AG04450 (cell line): ENCODE measurements at regions of chr6 and their contacts with region 1.

Region 1: GRCh38 chr6:37018198-37019064 is 13.0 kb downstream of the FGD2 start:
- DNase-seq: peak; percentile 82
- H3K4me3 ChIP-seq: no peak overlapping the region
- H3K27ac ChIP-seq: no peak overlapping the region
- H3K27me3 ChIP-seq: no peaks in the 10 kb centered on the region
- CTCF ChIP-seq: peak; percentile 95

Region 2: DNA sequence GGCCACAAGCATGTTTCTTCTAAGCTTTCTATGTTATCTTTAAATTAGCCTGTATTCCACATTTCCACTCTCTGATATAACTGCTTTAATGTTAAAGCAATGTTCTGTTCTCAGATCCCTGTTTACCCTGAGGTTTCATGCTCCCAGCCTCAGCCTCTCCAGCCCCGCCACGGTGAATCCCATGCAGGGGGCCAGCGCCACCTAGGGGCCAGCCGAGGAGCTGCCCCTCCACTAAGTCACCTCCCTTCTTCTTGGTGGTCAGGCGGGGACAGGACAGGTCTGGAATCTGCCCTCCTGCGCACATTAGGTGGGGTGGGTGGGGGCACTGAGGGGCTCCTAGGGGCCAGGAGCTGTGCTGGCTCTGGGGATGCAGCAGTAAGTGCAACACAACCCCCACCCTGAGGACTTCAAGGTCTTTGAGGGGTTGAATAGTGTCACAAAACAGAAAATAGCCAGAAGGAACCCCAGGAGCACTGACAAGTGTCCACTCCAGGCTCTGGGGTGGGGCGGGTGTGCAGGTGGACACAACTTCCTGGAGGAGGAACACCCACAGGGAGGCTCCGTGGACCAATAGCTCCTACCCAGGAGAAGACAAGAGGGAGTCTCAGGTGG is 259.2 kb before region 1 on chr6:
- CTCF ChIA-PET with region 1: interaction called, 210 read pairs
- POLR2A ChIA-PET with region 1: interaction called, 3 read pairs
- DNase-seq: peak; percentile 45
- H3K4me3 ChIP-seq: no peak overlapping the region
- H3K27ac ChIP-seq: no peak overlapping the region
- H3K27me3 ChIP-seq: peaks cover 4% of the 10 kb centered on the region
- CTCF ChIP-seq: peak; percentile 99

Region 3: DNA sequence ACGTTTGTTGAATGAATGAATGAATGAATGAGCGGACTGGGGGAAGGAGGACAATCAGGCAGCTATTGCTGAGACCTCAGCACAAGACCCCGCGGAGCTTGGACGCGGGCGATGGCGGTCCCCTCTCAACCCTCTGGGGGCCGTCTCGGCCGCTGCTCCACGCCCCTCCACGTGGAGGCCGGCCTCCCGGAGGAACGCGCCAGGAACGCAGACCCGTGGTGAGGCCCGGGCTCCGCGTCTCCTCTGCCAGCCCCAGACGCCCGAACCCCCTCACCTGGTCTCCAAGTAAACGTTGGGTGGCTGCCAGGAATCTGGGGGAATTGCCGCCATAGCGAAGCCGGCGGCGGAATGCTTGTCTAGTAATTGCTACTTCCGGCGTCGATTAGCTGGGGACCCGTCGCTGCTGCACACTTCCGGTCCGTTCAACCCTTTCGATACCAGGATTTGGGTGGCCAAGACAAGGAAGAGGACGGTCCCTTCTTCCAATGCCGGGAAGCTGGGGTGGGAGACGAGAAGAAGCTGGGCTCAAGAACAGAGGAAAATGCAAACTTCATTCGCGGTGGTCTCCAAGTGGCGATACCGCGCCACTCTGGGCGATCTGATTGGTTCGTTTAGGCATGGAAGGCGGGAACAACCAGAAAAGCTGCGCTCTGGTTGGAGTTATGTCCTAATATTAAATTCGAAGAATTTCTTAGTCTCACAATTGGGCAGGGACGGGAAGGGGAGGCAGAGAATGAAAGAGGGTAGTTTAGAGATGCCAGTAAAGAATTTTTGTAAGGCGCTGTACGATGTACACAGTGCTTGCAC is 143.8 kb before region 1 on chr6 and contains the start of gene PPIL1:
- CTCF ChIA-PET with region 1: interaction called, 22 read pairs
- POLR2A ChIA-PET with region 1: no interaction called
- DNase-seq: peak; percentile 76
- H3K4me3 ChIP-seq: peak within 1 kb of the TSS; percentile 98
- H3K27ac ChIP-seq: peak within 1 kb of the TSS; percentile 98
- H3K27me3 ChIP-seq: no peaks in the 10 kb centered on the region
- CTCF ChIP-seq: 0 out of 2 replicates have a peak, but pooled peaks have one; percentile 11
- polyA plus RNA-seq, gene PPIL1: 34.4 and 40.7 TPM in 2 replicates

Region 4: DNA sequence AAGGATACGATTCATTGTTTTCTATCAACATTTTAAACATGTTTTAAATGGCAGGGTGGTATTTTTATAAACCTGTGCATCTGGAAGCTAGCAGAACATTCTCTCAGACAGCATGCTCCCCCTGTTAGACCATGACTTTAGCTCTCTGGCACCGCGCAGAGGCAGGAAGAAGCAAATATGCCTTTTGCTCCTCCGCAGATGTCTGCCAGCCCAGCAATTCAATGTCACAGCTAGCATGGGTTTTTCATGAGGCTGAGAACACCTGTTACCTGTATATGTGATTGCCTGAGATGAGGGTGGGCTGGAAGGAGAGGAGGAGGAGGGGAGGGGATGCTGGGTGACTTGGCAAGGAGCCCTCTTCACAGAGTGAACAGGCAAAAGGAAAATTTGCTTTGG is 39.1 kb before region 1 on chr6:
- CTCF ChIA-PET with region 1: interaction called, 20 read pairs
- POLR2A ChIA-PET with region 1: interaction called, 6 read pairs
- DNase-seq: no peak
- H3K4me3 ChIP-seq: no peak overlapping the region
- H3K27ac ChIP-seq: no peak overlapping the region
- H3K27me3 ChIP-seq: no peaks in the 10 kb centered on the region
- CTCF ChIP-seq: peak; percentile 75

Region 5: DNA sequence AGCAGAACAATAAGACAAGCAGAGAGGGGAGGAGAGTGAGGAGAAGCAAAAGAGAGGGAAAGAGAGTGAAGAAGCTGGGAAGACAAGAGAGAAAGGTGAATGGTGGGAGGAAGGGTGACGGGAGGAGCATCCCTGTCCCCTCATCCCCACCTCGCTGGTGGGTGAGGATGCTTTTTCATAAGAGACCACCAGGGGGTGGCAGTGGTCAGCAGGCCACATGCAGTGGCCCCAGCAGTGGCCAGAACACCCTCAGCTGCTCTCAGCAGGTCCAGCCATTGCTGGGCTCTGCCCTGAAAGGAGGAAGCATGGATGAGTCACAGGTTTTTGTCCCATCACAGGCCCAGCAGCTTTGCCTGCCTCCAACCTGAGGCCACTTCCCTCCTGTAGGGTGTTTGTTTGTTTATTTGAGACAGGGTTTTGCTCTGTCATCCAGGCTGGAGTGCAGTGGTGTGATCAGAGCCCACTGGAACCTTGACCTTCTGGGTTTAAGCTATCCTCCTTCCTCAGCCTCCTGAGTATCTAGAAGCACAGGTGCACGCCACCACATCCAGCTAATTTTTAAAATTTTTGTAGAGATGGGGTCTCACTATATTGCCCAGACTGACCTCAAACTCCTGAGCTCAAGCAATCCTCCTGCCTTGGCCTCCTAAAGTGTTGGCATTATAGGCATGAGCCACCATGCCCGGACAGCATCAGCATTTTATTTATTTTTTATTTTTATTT is 11.0 kb after region 1 on chr6:
- CTCF ChIA-PET with region 1: interaction called, 53 read pairs
- POLR2A ChIA-PET with region 1: no interaction called
- DNase-seq: peak; percentile 69
- H3K4me3 ChIP-seq: no peak overlapping the region
- H3K27ac ChIP-seq: no peak overlapping the region
- H3K27me3 ChIP-seq: peaks cover 3% of the 10 kb centered on the region
- CTCF ChIP-seq: peak; percentile 79

Region 6: GRCh38 chr6:37177077-37177934 is 158.9 kb after region 1 on chr6:
- CTCF ChIA-PET with region 1: interaction called, 92 read pairs
- POLR2A ChIA-PET with region 1: interaction called, 4 read pairs
- DNase-seq: no peak
- H3K4me3 ChIP-seq: no peak overlapping the region
- H3K27ac ChIP-seq: no peak overlapping the region
- H3K27me3 ChIP-seq: no peaks in the 10 kb centered on the region
- CTCF ChIP-seq: no peak

Region 7: GRCh38 chr6:37222125-37222967 is 203.9 kb after region 1 on chr6:
- CTCF ChIA-PET with region 1: interaction called, 597 read pairs
- POLR2A ChIA-PET with region 1: no interaction called
- DNase-seq: no peak
- H3K4me3 ChIP-seq: peak overlapping the region; percentile 60
- H3K27ac ChIP-seq: peak overlapping the region; percentile 39
- H3K27me3 ChIP-seq: no peaks in the 10 kb centered on the region
- CTCF ChIP-seq: no peak